ENCODE measurements at regions of chr14 and their contacts with region 1.

Region 1: DNA sequence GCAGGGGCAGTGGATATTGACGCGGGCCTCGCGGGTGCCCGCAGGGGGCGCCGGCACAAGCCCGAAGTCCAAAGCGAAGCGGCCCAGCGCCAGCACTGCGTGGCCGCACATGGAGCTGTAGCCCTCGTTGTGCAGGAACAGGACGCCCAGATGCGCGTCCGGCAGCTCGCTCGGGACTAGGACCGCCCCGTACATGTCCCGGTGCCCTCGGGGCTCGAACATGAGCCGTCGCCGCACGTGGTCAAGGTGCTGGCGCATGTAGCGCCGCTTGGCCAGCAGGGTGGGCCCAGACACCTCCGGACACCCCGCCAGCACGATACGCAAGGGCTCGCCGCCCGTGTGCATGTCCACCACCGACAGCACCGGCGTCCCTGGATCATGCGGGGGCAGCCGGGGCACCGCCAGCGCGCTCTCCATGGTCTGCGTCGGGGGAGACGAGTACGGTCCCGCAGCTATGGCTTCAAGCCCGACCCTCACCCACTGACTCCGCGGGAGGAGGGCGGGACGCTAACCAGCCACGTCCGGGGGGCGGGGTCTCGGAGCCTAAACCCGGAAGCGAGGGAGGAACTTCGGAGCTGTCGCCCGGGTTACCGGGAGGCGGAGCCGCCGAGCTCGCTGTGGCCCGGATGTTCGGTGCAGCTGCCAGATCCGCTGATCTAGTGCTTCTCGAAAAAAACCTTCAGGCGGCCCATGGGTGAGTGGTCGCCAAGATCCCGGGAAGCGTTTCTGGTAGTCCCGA is at the starts of genes JKAMP and L3HYPDH:
- DNase-seq: peak; percentile 97 to 99 (median 99)
- H3K4me3 ChIP-seq: peak within 1 kb of the TSS; percentile 81 to 97 (median 90)
- H3K27ac ChIP-seq: peak within 1 kb of the TSS; percentile 66 to 87
- H3K4me1 ChIP-seq: peaks cover 21 to 64% (median 43%) of the 10 kb centered on the region in 4 experiments
- H3K27me3 ChIP-seq: no peaks in the 10 kb centered on the region

Region 2: DNA sequence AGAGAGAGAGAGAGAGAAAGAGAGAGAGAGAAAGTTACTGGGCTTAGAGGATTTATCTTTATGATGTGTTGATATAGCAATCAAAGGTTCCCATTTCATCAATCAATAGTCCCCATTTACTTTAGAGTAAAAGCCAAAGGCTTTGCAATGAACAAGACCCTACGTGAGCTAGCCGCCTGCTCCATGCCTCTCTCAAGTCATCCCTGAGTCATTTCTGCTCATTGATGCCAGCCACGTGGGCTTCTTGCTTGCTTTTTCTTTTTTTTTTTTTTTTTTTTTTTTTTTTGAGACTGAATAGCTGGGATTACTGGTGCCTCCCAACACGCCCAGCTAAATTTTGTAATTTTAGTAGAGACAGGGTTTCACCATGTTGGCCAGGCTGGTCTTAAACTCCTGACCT is 89.8 kb before region 1 on chr14:
- CTCF ChIA-PET with region 1: no interaction called
- POLR2A ChIA-PET with region 1: no interaction called
- DNase-seq: no peak
- H3K4me3 ChIP-seq: no peak overlapping the region
- H3K27ac ChIP-seq: no peak overlapping the region
- H3K4me1 ChIP-seq: peaks cover 0 to 16% (median 9%) of the 10 kb centered on the region in 4 experiments
- H3K27me3 ChIP-seq: no peaks in the 10 kb centered on the region

Region 3: GRCh38 chr14:59464486-59465315 is 19.4 kb before region 1 on chr14:
- CTCF ChIA-PET with region 1: interaction called, 21 read pairs
- POLR2A ChIA-PET with region 1: no interaction called
- DNase-seq: peak; percentile 55 to 93 (median 88)
- H3K4me3 ChIP-seq: peak overlapping the region; percentile 56 to 88 (median 67)
- H3K27ac ChIP-seq: peak overlapping the region in 1 of 2 experiments; percentile 43
- H3K4me1 ChIP-seq: peaks cover 0 to 19% (median 12%) of the 10 kb centered on the region in 4 experiments
- H3K27me3 ChIP-seq: peaks cover 0 to 3% (median 0%) of the 10 kb centered on the region in 5 experiments